ENCODE measurements at regions of chr7 and their contacts with region 1.

Region 1: GRCh38 chr7:67625257-67625737 is 628.7 kb downstream of the TYW1 start:
- DNase-seq: peak; percentile 5
- H3K4me3 ChIP-seq: peak overlapping the region; percentile 42
- CTCF ChIP-seq: peak; percentile 91

Region 2: GRCh38 chr7:67614843-67615242 is 10.5 kb before region 1 on chr7:
- CTCF ChIA-PET with region 1: interaction called, 14 read pairs
- POLR2A ChIA-PET with region 1: no interaction called
- DNase-seq: no peak
- H3K4me3 ChIP-seq: no peak overlapping the region
- CTCF ChIP-seq: no peak

Region 3: DNA sequence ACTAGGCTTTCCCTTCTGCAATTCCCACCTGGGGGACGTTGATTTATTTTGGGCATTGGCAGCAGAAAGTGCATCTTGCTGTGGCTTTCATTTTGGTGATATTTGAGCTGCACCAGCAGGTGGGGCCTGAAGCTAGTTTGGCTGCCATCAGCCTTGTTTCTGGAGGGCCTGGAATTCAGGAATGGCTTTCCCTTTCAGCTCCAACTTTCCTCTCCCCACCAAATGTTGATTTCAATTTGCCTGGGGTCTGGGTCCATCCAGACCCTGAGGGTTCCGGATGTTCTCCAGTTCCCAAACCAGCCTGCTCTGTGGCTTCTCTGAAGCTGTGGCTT is 11.7 kb after region 1 on chr7:
- CTCF ChIA-PET with region 1: interaction called, 16 read pairs
- POLR2A ChIA-PET with region 1: no interaction called
- DNase-seq: no peak
- H3K4me3 ChIP-seq: no peak overlapping the region
- CTCF ChIP-seq: no peak

Measured in AG04449 (cell line).